GM10248 (cell line): ENCODE measurements at regions of chr6 and their contacts with region 1.

Region 1: GRCh38 chr6:46129629-46130511 is at the start of gene ENPP4:
- DNase-seq: peak; percentile 96
- CTCF ChIP-seq: no peak

Region 2: GRCh38 chr6:45031601-45032000 is 1098.3 kb before region 1 on chr6:
- CTCF ChIA-PET with region 1: no interaction called
- POLR2A ChIA-PET with region 1: no interaction called
- DNase-seq: no peak
- CTCF ChIP-seq: no peak

Region 3: DNA sequence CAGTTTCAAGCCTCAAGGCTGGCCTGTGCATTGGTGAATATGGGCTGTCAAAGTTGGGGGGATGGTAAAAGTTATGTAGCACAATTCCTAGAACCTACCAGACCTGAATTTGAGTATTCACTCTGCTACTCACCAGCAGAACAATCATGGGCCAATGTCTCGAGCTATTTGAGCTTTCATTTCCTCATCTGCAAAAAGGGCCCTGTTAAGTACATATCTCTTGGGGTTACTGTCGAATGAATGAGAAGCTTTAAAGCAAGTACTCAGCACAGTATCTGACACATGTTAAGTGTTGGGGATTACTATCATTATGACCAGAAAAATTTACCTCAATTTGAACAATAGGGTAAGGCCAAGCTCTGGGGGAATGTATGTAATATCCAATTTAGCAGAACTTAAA is 13.6 kb before region 1 on chr6:
- CTCF ChIA-PET with region 1: interaction called, 13 read pairs
- POLR2A ChIA-PET with region 1: no interaction called
- DNase-seq: no peak
- CTCF ChIP-seq: no peak

Region 4: GRCh38 chr6:46243754-46244153 is 113.9 kb after region 1 on chr6:
- CTCF ChIA-PET with region 1: no interaction called
- POLR2A ChIA-PET with region 1: no interaction called
- DNase-seq: no peak
- CTCF ChIP-seq: no peak